HepG2 (cell line): ENCODE measurements at regions of chr21 and their contacts with region 1.

Region 1: GRCh38 chr21:27564684-27565301 is 597.9 kb upstream of the ADAMTS5 start:
- DNase-seq: no peak
- ATAC-seq: peak; percentile 45; the same call in 1 of the 3 replicates
- H3K4me3 ChIP-seq: no peak overlapping the region
- H3K27ac ChIP-seq: no peak overlapping the region
- H3K4me1 ChIP-seq: no peaks in the 10 kb centered on the region
- H3K27me3 ChIP-seq: no peaks in the 10 kb centered on the region
- CTCF ChIP-seq: no peak
- EP300 ChIP-seq: no peak
- POLR2A ChIP-seq: no peak
- RAD21 ChIP-seq: 0 out of 2 replicates have a peak, but pooled peaks have one; percentile 15

Region 2: GRCh38 chr21:27674041-27674615 is 109.3 kb after region 1 on chr21:
- CTCF ChIA-PET with region 1: no interaction called
- POLR2A ChIA-PET with region 1: no interaction called
- in situ Hi-C with region 1: loop called (anchors 25 kb)
- intact Hi-C with region 1: no loop called
- DNase-seq: no peak
- ATAC-seq: no peak
- H3K4me3 ChIP-seq: no peak overlapping the region
- H3K27ac ChIP-seq: no peak overlapping the region
- H3K4me1 ChIP-seq: no peaks in the 10 kb centered on the region
- H3K27me3 ChIP-seq: no peaks in the 10 kb centered on the region
- CTCF ChIP-seq: no peak
- EP300 ChIP-seq: no peak
- POLR2A ChIP-seq: no peak
- RAD21 ChIP-seq: no peak